MCF 10A (cell line): ENCODE measurements at regions of chr13 and their contacts with region 1.

Region 1: DNA sequence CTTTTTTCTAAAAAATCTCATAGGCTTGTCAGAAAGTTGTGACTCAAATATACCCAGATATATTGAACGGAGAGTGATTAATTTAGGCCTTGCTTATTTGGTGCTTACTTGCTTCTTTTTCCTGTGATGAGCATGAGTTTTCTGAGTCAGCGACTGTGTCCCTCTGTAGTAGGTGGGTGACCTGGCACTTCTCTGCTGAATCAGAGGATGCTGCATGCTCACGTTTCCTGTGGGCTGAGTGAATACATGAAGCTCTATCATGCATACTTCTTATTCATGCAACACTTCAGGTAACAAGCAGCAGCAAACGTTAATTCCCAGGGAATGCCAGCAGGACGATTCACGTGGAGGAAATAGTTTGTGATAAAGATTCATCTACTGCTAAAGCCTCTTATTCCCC is 245.0 kb downstream of the KLF5 start:
- DNase-seq: peak; percentile 47
- H3K4me3 Mint-ChIP-seq: no peak overlapping the region
- H3K27ac Mint-ChIP-seq: no peak overlapping the region
- H3K4me1 Mint-ChIP-seq: peaks cover 6% of the 10 kb centered on the region
- H3K27me3 Mint-ChIP-seq: no peaks in the 10 kb centered on the region
- CTCF ChIP-seq: no peak

Region 2: GRCh38 chr13:73286976-73287674 is 16.7 kb before region 1 on chr13:
- CTCF ChIA-PET with region 1: interaction called, 3 read pairs
- POLR2A ChIA-PET with region 1: interaction called, 13 read pairs
- intact Hi-C with region 1: no loop called
- DNase-seq: peak; percentile 49
- H3K4me3 Mint-ChIP-seq: no peak overlapping the region
- H3K27ac Mint-ChIP-seq: peak overlapping the region; percentile 83
- H3K4me1 Mint-ChIP-seq: peaks cover 18% of the 10 kb centered on the region
- H3K27me3 Mint-ChIP-seq: no peaks in the 10 kb centered on the region
- CTCF ChIP-seq: no peak